Gastrocnemius medialis (tissue), 4 donors: ENCODE measurements at regions of chr17 and their contacts with region 1.

Region 1: GRCh38 chr17:53133876-53134275 is 688.9 kb upstream of the KIF2B start:
- DNase-seq: no peak
- ATAC-seq: no peak
- H3K4me3 ChIP-seq: no peak overlapping the region
- H3K27ac ChIP-seq: no peak overlapping the region
- H3K4me1 ChIP-seq: peaks cover 11 to 15% of the 10 kb centered on the region in 2 donors
- H3K27me3 ChIP-seq: no peaks in the 10 kb centered on the region
- CTCF ChIP-seq: no peak
- POLR2A ChIP-seq: no peak

Region 2: GRCh38 chr17:53186001-53186400 is 52.1 kb after region 1 on chr17:
- in situ Hi-C with region 1: loop called in 1 of 4 experiments (anchors 10 kb)
- intact Hi-C with region 1: no loop called
- DNase-seq: no peak
- ATAC-seq: no peak
- H3K4me3 ChIP-seq: no peak overlapping the region
- H3K27ac ChIP-seq: no peak overlapping the region
- H3K4me1 ChIP-seq: no peaks in the 10 kb centered on the region
- H3K27me3 ChIP-seq: no peaks in the 10 kb centered on the region
- CTCF ChIP-seq: no peak
- POLR2A ChIP-seq: no peak